WTC11 (cell line): ENCODE measurements at regions of chr12 and their contacts with region 1.

Region 1: DNA sequence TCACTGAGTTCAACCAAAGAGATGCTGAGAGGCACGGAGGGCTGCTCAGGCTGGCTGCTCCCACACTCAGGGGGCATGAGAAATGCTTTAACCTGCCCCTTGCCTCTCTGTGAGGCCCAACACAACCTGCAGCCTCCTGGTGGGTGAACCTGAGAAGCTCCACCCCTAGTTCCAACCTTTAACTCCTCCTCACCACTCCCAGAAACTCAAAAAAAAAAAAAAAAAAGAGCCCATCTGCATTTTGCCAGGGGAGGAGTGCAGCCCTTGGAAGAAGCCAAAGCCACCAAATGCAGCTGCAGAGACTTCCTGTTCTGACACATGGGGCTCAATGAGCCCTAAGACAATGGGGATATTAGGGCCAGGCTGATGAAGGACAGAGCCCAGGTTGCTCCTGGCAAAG is 8.9 kb downstream of the KRT4 start:
- DNase-seq: peak; percentile 45
- ATAC-seq: peak; percentile 93
- H3K4me3 Mint-ChIP-seq: no peak overlapping the region
- H3K27ac Mint-ChIP-seq: peak overlapping the region; percentile 47; the same call in 1 of the 2 replicates
- H3K4me1 Mint-ChIP-seq: peaks cover 42% of the 10 kb centered on the region
- H3K27me3 Mint-ChIP-seq: peaks cover 2% of the 10 kb centered on the region; the same call in 1 of the 2 replicates
- CTCF ChIP-seq: no peak

Region 2: GRCh38 chr12:52789637-52790426 is 15.2 kb before region 1 on chr12:
- CTCF ChIA-PET with region 1: interaction called, 13 read pairs
- POLR2A ChIA-PET with region 1: interaction called, 3 read pairs
- DNase-seq: peak; percentile 56
- ATAC-seq: peak; percentile 75
- H3K4me3 Mint-ChIP-seq: peak overlapping the region; percentile 50
- H3K27ac Mint-ChIP-seq: no peak overlapping the region
- H3K4me1 Mint-ChIP-seq: peaks cover 7% of the 10 kb centered on the region
- H3K27me3 Mint-ChIP-seq: peaks cover 14% of the 10 kb centered on the region
- CTCF ChIP-seq: no peak

Region 3: GRCh38 chr12:52837413-52837741 is 32.4 kb after region 1 on chr12:
- CTCF ChIA-PET with region 1: no interaction called
- POLR2A ChIA-PET with region 1: no interaction called
- DNase-seq: no peak
- ATAC-seq: no peak
- H3K4me3 Mint-ChIP-seq: no peak overlapping the region
- H3K27ac Mint-ChIP-seq: no peak overlapping the region
- H3K4me1 Mint-ChIP-seq: no peaks in the 10 kb centered on the region
- H3K27me3 Mint-ChIP-seq: peaks cover 5% of the 10 kb centered on the region; the same call in 1 of the 2 replicates
- CTCF ChIP-seq: no peak

Region 4: GRCh38 chr12:52847335-52848102 is 42.5 kb after region 1 on chr12:
- CTCF ChIA-PET with region 1: no interaction called
- POLR2A ChIA-PET with region 1: no interaction called
- DNase-seq: no peak
- ATAC-seq: no peak
- H3K4me3 Mint-ChIP-seq: no peak overlapping the region
- H3K27ac Mint-ChIP-seq: no peak overlapping the region
- H3K4me1 Mint-ChIP-seq: no peaks in the 10 kb centered on the region
- H3K27me3 Mint-ChIP-seq: no peaks in the 10 kb centered on the region; the same call in 1 of the 2 replicates
- CTCF ChIP-seq: no peak